HCT116 (cell line): ENCODE measurements at regions of chr3 and their contacts with region 1.

Region 1: GRCh38 chr3:23888617-23889228 is 28.1 kb downstream of the NKIRAS1 start:
- DNase-seq: peak; percentile 33
- ATAC-seq: peak; percentile 44
- H3K4me3 ChIP-seq: no peak overlapping the region
- H3K27ac ChIP-seq: no peak overlapping the region
- H3K4me1 ChIP-seq: peaks cover 0 to 6% of the 10 kb centered on the region in 2 experiments; a peak in 3 of 4 replicates
- H3K27me3 ChIP-seq: no peaks in the 10 kb centered on the region
- CTCF ChIP-seq: peak; percentile 41 to 84 (median 74); a peak in 5 of 6 replicates
- POLR2A ChIP-seq: no peak
- RAD21 ChIP-seq: peak; percentile 76

Region 2: DNA sequence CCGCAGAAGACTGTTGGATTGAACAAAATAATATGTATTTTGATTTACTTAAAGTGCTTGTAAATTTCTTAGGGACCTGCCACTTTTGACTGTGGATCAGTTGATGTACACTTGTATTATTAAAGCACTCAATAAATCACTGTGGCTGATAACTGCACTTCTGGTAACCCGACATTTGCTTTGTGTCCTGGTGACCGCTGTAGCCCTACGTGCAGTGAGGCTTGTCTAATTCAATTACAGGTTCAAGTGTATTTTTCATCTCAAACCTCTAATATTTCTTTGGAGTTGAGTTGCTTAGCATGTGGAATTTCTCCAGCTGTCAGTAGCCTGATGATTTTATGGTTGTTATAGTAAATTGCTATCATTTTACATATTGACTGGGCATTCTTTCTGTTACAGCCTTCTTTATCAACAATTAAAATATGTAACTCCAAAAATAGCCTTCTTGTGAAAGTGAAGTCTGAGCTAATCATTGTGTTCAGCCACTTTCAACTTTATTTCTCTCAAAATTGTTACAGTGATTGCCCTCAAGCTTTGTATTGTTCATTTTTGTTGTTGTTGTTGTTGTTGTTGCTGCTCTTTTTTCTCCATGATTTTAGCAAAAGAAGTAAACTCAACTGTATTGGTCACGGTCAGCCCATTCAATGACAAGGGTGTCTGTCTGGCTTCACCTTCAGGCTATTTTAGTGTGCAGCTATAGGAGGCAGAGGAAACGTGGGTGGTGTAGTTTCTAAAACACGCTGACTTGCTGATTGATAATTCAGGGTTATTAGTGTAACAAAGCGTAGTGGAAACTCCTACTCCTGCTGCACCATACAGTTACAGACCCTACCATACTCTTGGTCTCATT is 298.1 kb before region 1 on chr3:
- CTCF ChIA-PET with region 1: no interaction called
- POLR2A ChIA-PET with region 1: no interaction called
- RAD21 ChIA-PET with region 1: no interaction called
- intact Hi-C with region 1: no loop called
- DNase-seq: no peak
- ATAC-seq: no peak
- H3K4me3 ChIP-seq: no peak overlapping the region
- H3K27ac ChIP-seq: no peak overlapping the region
- H3K4me1 ChIP-seq: no peaks in the 10 kb centered on the region
- H3K27me3 ChIP-seq: no peaks in the 10 kb centered on the region
- CTCF ChIP-seq: no peak
- POLR2A ChIP-seq: no peak
- RAD21 ChIP-seq: no peak

Region 3: GRCh38 chr3:23834082-23834870 is 54.4 kb before region 1 on chr3:
- CTCF ChIA-PET with region 1: interaction called, 14 read pairs
- POLR2A ChIA-PET with region 1: interaction called, 3 read pairs
- RAD21 ChIA-PET with region 1: no interaction called
- intact Hi-C with region 1: no loop called
- DNase-seq: no peak
- ATAC-seq: peak; percentile 62
- H3K4me3 ChIP-seq: no peak overlapping the region
- H3K27ac ChIP-seq: no peak overlapping the region
- H3K4me1 ChIP-seq: peaks cover 0 to 9% of the 10 kb centered on the region in 2 experiments; a peak in 2 of 4 replicates
- H3K27me3 ChIP-seq: no peaks in the 10 kb centered on the region
- CTCF ChIP-seq: peak in 1 of 3 experiments; percentile 35; a peak in 1 of 6 replicates
- POLR2A ChIP-seq: no peak
- RAD21 ChIP-seq: peak; percentile 53

Region 4: DNA sequence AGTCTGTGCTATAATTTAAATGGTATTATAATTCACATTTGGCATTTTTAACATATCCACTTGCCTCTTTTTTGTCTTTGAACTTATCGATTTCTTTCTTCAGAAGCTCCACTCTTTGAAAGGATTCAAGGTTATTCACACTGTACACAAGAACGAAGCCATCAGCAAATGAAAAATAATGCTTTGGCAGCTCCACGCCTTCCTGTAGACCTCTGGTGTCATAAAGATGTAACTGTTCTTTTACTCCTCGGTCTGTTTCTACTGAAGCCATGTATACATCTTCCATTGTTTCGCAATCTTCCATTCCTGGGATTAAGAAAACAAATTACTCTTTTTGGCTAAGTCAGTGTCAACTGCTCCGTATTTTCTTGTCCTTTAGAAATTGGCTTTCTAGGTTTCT is 12.0 kb after region 1 on chr3:
- CTCF ChIA-PET with region 1: interaction called, 11 read pairs
- POLR2A ChIA-PET with region 1: no interaction called
- RAD21 ChIA-PET with region 1: no interaction called
- intact Hi-C with region 1: no loop called
- DNase-seq: no peak
- ATAC-seq: no peak
- H3K4me3 ChIP-seq: no peak overlapping the region
- H3K27ac ChIP-seq: no peak overlapping the region
- H3K4me1 ChIP-seq: no peaks in the 10 kb centered on the region
- H3K27me3 ChIP-seq: no peaks in the 10 kb centered on the region
- CTCF ChIP-seq: no peak
- POLR2A ChIP-seq: no peak
- RAD21 ChIP-seq: no peak

Region 5: GRCh38 chr3:24237971-24238767 is 349.4 kb after region 1 on chr3:
- CTCF ChIA-PET with region 1: interaction called, 4 read pairs
- POLR2A ChIA-PET with region 1: no interaction called
- RAD21 ChIA-PET with region 1: no interaction called
- intact Hi-C with region 1: loop called (anchors 2 kb)
- DNase-seq: peak; percentile 75
- ATAC-seq: peak; percentile 91
- H3K4me3 ChIP-seq: no peak overlapping the region
- H3K27ac ChIP-seq: no peak overlapping the region
- H3K4me1 ChIP-seq: peaks cover 7 to 17% of the 10 kb centered on the region in 2 experiments; a peak in 2 of 4 replicates
- H3K27me3 ChIP-seq: no peaks in the 10 kb centered on the region
- CTCF ChIP-seq: peak; percentile 76 to 93 (median 82)
- POLR2A ChIP-seq: no peak
- RAD21 ChIP-seq: peak; percentile 89

Region 6: DNA sequence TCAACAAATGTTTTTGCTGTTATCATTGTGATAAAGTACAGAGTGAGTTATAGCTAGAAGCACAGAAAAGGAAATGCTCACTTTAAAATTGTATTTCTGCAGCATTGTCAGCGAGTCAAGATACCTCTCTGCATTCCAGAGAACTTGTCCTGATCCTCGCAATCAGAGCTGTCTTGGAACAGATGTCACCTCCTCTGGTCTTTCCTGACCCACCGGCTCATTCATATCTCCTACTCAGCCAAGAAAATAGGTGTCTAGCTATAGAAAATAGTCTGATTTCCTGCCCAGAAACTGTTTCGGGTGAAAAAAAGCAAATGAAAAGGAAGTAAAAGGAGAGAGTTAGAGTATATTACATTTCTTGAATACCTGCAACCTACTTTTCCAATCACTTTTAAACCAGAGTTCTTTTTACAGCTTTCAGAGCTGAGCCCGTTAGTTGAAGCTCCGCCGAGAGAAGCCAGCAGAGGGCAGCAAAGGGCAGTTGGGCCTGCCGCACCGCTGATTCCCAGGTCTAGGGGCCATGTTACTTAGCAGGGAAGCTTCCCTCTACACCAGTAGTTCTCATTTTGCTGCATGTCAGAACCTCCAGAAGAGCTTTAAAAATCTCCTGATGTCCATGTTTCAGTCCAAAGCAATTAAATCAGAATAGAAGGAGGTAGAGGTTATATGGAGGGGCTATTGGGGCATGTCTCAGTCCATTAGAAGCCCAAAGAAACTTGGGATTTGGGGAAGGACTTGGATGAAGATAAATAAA is 791.7 kb after region 1 on chr3:
- CTCF ChIA-PET with region 1: interaction called, 3 read pairs
- POLR2A ChIA-PET with region 1: no interaction called
- RAD21 ChIA-PET with region 1: no interaction called
- intact Hi-C with region 1: loop called (anchors 5 kb)
- DNase-seq: peak; percentile 42
- ATAC-seq: peak; percentile 96
- H3K4me3 ChIP-seq: no peak overlapping the region
- H3K27ac ChIP-seq: no peak overlapping the region
- H3K4me1 ChIP-seq: peaks cover 0 to 6% of the 10 kb centered on the region in 2 experiments; a peak in 1 of 4 replicates
- H3K27me3 ChIP-seq: no peaks in the 10 kb centered on the region
- CTCF ChIP-seq: peak; percentile 48 to 93 (median 91); a peak in 5 of 6 replicates
- POLR2A ChIP-seq: no peak
- RAD21 ChIP-seq: peak; percentile 59